ENCODE measurements at regions of chr1 and their contacts with region 1.

Region 1: DNA sequence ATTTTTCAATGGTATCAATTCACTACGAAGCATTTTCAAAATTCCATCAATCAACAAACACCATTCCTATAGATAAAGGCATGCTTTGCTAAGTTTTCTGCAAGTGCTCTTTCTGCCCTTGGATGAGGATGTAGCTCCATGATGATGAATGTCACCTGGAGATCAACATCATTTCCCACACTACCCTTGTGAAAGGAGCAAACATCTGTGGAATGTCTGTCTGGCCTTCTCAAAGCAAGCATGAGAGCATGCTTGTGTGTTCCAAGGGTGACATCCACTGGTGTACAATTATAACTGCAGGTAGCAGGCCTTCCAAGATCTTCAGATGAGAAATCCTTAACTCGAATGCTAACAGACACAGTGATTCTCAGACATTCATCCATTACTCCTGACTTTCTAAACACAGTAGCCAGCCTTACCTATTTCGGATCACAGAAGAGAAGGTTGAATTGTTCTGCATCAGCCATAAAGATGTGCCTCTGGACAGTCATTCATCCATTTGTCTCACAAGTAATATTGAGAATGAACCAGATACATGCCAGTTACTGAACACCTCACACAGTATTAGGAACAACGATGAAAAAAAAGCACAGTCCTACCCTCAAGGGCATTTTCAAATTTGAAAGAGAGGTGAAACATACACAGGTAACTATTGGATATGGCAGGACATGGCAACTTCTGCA is 162.4 kb downstream of the TPR start:
- DNase-seq: peak; percentile 19
- H3K4me3 Mint-ChIP-seq: no peak overlapping the region
- H3K27ac Mint-ChIP-seq: no peak overlapping the region
- H3K4me1 Mint-ChIP-seq: no peaks in the 10 kb centered on the region
- H3K27me3 Mint-ChIP-seq: peaks cover 26% of the 10 kb centered on the region

Region 2: DNA sequence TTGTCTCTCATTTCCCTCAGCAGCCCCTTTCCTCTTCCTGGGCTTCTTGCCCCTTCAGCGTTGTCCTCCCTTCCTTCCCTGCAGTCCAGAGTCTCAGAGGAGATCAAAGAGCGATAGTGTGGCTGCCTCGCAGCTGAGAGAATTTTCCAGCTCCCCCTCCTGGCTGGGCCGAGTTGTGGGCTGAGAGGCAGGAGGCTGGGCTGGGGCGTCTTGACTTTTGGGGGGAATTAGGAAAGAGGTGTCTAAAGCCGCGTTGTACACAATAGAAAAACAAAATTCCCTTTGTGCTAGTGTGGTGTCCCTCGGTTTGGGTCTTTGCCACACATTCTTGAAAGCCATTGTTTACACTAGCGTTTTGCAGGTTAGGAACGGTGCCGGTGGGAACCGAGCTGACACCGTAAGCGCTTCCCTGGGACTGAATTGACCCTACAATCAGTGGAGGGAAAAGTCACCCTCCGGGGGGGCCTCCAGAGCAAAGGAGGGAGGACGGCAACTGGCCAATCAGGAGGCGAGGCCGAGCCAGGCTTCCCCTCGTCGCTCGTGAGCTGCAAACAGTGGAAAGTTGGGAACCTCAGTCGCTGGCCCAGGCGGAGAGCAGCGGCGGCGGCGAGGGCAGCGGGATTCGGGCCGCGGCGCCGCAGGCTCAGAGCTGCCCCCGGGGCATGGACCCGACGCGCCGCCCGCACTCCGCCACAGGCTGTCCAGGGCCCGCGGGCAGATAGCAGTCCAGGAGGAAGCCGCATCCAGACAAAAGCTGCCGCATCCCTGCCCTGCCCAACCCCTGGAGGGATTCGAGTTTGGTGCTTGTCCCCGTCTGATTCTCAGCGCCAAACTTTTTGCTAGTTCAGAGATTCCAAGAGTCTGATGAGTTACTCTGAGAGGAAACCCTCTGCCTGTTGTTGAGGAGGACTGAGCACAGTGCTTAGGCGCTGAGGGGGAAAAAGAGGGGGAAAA is 478.6 kb before region 1 on chr1 and contains the start of gene HMCN1:
- intact Hi-C with region 1: loop called (anchors 10 kb)
- DNase-seq: peak; percentile 9
- H3K4me3 Mint-ChIP-seq: peak within 1 kb of the TSS; percentile 70
- H3K27ac Mint-ChIP-seq: no peak within 1 kb of the TSS
- H3K4me1 Mint-ChIP-seq: peaks cover 18% of the 10 kb centered on the region
- H3K27me3 Mint-ChIP-seq: peaks cover 59% of the 10 kb centered on the region
- total RNA-seq, gene HMCN1: under 0.01 TPM in 1 of 2 replicates, not detected in the other

Region 3: DNA sequence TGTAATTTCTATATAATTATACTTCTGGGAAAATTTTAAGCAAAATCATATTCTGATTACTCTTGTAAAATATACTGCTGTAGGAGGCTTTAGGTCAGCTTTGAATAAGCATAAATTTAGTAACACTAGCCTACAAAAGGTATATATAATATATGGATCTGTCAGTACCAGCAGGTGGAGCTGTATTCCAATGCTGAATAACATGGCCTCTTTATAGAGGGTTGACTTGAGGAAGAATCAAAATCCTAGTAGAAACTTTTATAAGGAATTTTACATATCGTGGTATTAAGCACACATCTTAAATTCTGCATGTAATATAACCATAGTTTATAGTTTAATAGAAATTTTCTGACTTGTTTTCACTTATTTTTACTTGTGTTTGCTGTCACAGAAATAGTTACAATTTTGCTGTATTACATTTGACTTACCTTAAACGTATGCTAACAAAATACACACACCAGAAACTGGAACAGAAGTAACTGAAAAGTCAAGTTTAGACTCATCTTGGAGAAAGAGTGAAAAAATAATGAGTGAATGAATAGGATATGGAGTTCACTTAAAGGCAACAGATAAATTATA is 399.2 kb before region 1 on chr1:
- intact Hi-C with region 1: loop called (anchors 1 kb)
- DNase-seq: no peak
- H3K4me3 Mint-ChIP-seq: no peak overlapping the region
- H3K27ac Mint-ChIP-seq: no peak overlapping the region
- H3K4me1 Mint-ChIP-seq: no peaks in the 10 kb centered on the region
- H3K27me3 Mint-ChIP-seq: peaks cover 3% of the 10 kb centered on the region

Region 4: GRCh38 chr1:186155594-186155993 is 57.1 kb before region 1 on chr1:
- intact Hi-C with region 1: loop called (anchors 1 kb)
- DNase-seq: no peak
- H3K4me3 Mint-ChIP-seq: no peak overlapping the region
- H3K27ac Mint-ChIP-seq: no peak overlapping the region
- H3K4me1 Mint-ChIP-seq: no peaks in the 10 kb centered on the region
- H3K27me3 Mint-ChIP-seq: peaks cover 4% of the 10 kb centered on the region